ENCODE measurements at regions of chr10 and their contacts with region 1.

Region 1: GRCh38 chr10:126242397-126243287 is 145.6 kb downstream of the ADAM12 start:
- DNase-seq: peak; percentile 65
- H3K4me3 ChIP-seq: no peak overlapping the region
- CTCF ChIP-seq: no peak

Region 2: DNA sequence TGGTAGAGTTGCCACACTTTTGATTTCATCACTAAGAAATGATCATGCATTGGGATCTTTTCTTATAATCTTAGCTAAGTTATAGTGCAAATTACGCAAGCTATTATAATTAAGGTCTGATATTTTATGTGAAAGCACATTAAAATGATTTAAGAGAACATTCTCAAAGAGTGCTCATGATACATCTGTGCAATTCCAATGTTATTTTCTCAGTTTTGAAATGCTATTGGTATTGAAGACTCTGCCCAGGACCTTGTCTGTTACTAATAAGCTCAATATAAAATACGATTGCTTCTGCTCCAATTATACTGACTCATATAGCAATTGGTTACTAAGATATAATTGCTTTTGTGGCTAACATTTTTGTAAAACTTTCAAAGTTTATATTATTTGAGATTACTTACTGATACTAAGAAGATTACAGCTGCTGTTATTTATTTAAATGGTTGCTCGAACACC is 35.3 kb before region 1 on chr10:
- CTCF ChIA-PET with region 1: interaction called, 3 read pairs
- POLR2A ChIA-PET with region 1: interaction called, 11 read pairs
- DNase-seq: peak; percentile 83
- H3K4me3 ChIP-seq: no peak overlapping the region
- CTCF ChIP-seq: no peak

Region 3: GRCh38 chr10:126259760-126260479 is 17.3 kb after region 1 on chr10:
- CTCF ChIA-PET with region 1: no interaction called
- POLR2A ChIA-PET with region 1: no interaction called
- DNase-seq: no peak
- H3K4me3 ChIP-seq: no peak overlapping the region
- CTCF ChIP-seq: no peak

Region 4: DNA sequence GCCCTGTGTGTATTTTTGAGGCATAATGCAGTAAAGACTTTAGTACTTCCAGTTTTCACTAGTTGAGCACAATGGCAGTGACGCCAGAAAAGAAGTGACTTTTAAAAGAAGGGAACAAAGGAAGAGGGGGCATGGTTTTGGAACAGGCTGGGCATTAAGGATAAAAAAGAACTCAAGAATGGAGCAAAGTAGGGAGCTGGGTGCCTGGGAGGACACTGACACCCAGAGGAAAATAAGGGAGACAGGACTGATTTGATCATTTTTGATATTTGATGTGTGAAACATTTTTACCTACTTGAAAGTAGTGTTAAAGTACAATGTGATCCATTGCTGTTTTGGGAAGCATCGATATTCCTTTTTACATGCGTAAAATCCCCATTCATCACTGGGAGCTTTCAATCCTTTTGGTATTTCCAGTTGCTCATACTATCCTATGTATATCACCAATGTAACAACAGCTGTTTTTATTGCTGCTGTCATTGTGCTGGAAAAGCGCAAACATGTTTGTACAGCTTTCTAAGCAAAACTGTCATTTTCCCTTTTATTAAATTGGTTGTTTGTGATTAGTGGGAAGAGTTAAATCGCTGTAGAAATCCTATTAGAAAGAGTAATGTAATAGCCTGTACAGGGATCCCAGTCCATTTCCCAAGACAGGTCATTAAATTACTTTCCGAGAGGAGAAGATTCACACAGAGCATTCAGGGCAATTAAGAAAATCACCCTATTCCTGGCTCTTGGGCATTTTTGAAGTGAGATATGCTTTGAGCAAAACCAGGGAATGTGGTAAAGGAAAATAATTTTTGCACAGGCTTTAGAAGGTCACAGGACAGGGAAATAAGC is 60.4 kb after region 1 on chr10:
- CTCF ChIA-PET with region 1: no interaction called
- POLR2A ChIA-PET with region 1: no interaction called
- DNase-seq: no peak
- H3K4me3 ChIP-seq: no peak overlapping the region
- CTCF ChIP-seq: peak; percentile 3

Measured in AG04449 (cell line).